Natural killer cell (primary cell): ENCODE measurements at regions of chr3 and their contacts with region 1.

Region 1: GRCh38 chr3:105806361-105806760 is 62.5 kb downstream of the CBLB start:
- DNase-seq: peak in 1 of 2 donors; percentile 70
- ATAC-seq: peak; percentile 82 to 86 (median 86)
- H3K4me3 ChIP-seq: no peak overlapping the region
- H3K4me3 Mint-ChIP-seq: peak overlapping the region; percentile 67
- H3K27ac ChIP-seq: peak overlapping the region; percentile 42
- H3K27ac Mint-ChIP-seq: peak overlapping the region; percentile 75 to 89
- H3K4me1 ChIP-seq: peaks cover 12% of the 10 kb centered on the region
- H3K4me1 Mint-ChIP-seq: peaks cover 59 to 65% of the 10 kb centered on the region in 2 donors
- H3K27me3 ChIP-seq: no peaks in the 10 kb centered on the region
- H3K27me3 Mint-ChIP-seq: no peaks in the 10 kb centered on the region
- CTCF ChIP-seq: no peak

Region 2: GRCh38 chr3:105255350-105255953 is 550.9 kb before region 1 on chr3:
- intact Hi-C with region 1: no loop called
- DNase-seq: no peak
- ATAC-seq: no peak
- H3K4me3 ChIP-seq: no peak overlapping the region
- H3K4me3 Mint-ChIP-seq: no peak overlapping the region
- H3K27ac ChIP-seq: no peak overlapping the region
- H3K27ac Mint-ChIP-seq: no peak overlapping the region
- H3K4me1 ChIP-seq: no peaks in the 10 kb centered on the region
- H3K4me1 Mint-ChIP-seq: no peaks in the 10 kb centered on the region
- H3K27me3 ChIP-seq: no peaks in the 10 kb centered on the region
- H3K27me3 Mint-ChIP-seq: no peaks in the 10 kb centered on the region
- CTCF ChIP-seq: no peak

Region 3: DNA sequence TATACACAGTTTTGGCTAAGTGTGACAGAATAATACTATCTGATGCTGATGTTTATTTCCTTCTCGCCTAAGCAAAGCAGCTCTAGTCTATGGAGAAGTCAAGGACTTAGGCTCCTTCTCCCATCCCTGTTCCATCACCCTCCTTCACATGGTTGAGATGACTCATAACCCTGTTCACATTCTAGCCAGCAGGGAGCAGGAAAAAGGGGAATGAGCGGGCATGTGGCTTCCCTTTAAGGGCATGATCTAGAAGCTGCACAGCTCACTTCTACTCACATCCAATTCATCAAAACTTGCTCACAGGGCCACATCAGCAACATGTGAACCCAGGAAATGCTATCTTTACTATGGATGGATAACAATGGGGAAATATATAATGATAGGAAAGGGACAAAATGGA is 21.6 kb after region 1 on chr3:
- intact Hi-C with region 1: loop called (anchors 1 kb)
- DNase-seq: peak in 1 of 2 donors; percentile 40
- ATAC-seq: no peak
- H3K4me3 ChIP-seq: no peak overlapping the region
- H3K4me3 Mint-ChIP-seq: peak overlapping the region; percentile 30
- H3K27ac ChIP-seq: peak overlapping the region; percentile 56
- H3K27ac Mint-ChIP-seq: peak overlapping the region; percentile 83
- H3K4me1 ChIP-seq: peaks cover 28% of the 10 kb centered on the region
- H3K4me1 Mint-ChIP-seq: peaks cover 87 to 88% of the 10 kb centered on the region in 2 donors
- H3K27me3 ChIP-seq: no peaks in the 10 kb centered on the region
- H3K27me3 Mint-ChIP-seq: no peaks in the 10 kb centered on the region
- CTCF ChIP-seq: no peak

Region 4: GRCh38 chr3:105842943-105843342 is 36.6 kb after region 1 on chr3:
- intact Hi-C with region 1: loop called (anchors 5 kb)
- DNase-seq: no peak
- ATAC-seq: no peak
- H3K4me3 ChIP-seq: no peak overlapping the region
- H3K4me3 Mint-ChIP-seq: no peak overlapping the region
- H3K27ac ChIP-seq: no peak overlapping the region
- H3K27ac Mint-ChIP-seq: no peak overlapping the region
- H3K4me1 ChIP-seq: no peaks in the 10 kb centered on the region
- H3K4me1 Mint-ChIP-seq: peaks cover 67 to 69% of the 10 kb centered on the region in 2 donors
- H3K27me3 ChIP-seq: no peaks in the 10 kb centered on the region
- H3K27me3 Mint-ChIP-seq: no peaks in the 10 kb centered on the region
- CTCF ChIP-seq: no peak